Transverse colon (tissue), 4 donors: ENCODE measurements at regions of chr15 and their contacts with region 1.

Region 1: DNA sequence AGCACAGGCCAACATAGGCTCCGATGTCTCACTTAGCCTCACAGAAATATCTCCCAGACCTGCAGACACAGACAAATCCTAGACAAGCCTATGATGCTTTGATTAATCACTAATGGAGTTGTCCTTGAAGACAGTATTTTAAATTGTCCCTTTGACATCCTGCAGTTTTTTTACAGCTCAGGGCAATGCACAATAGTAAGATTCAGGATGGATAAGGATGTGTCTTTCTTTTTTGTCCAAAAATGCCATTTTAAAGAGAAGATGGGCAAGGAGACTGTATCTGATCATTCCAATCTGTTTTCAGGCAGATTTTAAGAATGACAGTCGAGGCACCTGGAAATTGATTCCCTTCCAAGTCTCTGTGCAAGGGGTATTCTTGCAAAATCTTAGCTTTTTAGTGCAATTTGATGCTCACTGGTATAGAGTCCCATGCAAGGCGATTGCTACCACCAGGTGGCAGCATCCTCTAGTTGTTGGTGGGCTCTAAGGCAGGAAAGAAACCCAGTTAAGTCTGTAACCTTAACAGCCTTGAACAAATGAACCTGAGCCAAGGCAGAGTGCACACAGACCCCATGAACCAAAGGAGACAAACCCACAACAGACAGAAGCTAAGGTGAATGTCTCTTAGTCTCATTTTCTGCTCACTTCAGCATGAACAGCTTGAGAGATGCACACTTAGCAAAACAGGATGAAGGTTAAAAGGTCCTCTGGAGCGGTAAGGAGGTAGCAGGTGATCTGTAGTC is 51.2 kb upstream of the MINAR1 start:
- DNase-seq: peak; percentile 76
- H3K4me3 ChIP-seq: no peak overlapping the region
- H3K27ac ChIP-seq: no peak overlapping the region
- H3K4me1 ChIP-seq: peaks cover 0 to 3% (median 0%) of the 10 kb centered on the region in 4 donors
- H3K27me3 ChIP-seq: no peaks in the 10 kb centered on the region
- CTCF ChIP-seq: peak; percentile 78 to 89 (median 87)
- EP300 ChIP-seq: no peak
- POLR2A ChIP-seq: no peak

Region 2: DNA sequence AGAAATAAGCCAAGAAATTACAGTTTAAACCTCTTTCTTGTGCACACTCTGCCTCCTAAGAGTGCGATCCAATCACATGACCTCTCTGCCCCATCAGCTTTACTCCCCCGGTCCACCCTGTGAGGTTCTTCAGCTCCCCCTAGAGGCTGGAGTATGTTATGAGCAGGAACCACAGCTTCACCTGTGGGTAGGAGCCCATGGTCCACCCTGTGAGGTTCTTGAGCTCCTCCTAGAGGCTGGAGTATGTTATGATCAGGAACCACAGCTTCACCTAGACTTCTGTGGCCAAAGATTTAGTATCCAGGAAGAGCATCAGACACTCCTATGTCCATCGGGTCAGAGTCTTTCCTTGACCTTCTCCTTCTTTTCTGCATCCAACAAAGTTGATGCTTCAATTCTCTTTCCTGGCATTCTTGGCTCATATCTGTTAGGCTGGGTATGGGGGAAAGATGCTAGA is 215.2 kb after region 1 on chr15:
- in situ Hi-C with region 1: loop called in 1 of 4 experiments (anchors 10 kb)
- intact Hi-C with region 1: no loop called
- DNase-seq: peak; percentile 47
- H3K4me3 ChIP-seq: no peak overlapping the region
- H3K27ac ChIP-seq: no peak overlapping the region
- H3K4me1 ChIP-seq: no peaks in the 10 kb centered on the region
- H3K27me3 ChIP-seq: peaks cover 5% of the 10 kb centered on the region
- CTCF ChIP-seq: peak; percentile 54 to 93 (median 81)
- EP300 ChIP-seq: no peak
- POLR2A ChIP-seq: no peak

Region 3: DNA sequence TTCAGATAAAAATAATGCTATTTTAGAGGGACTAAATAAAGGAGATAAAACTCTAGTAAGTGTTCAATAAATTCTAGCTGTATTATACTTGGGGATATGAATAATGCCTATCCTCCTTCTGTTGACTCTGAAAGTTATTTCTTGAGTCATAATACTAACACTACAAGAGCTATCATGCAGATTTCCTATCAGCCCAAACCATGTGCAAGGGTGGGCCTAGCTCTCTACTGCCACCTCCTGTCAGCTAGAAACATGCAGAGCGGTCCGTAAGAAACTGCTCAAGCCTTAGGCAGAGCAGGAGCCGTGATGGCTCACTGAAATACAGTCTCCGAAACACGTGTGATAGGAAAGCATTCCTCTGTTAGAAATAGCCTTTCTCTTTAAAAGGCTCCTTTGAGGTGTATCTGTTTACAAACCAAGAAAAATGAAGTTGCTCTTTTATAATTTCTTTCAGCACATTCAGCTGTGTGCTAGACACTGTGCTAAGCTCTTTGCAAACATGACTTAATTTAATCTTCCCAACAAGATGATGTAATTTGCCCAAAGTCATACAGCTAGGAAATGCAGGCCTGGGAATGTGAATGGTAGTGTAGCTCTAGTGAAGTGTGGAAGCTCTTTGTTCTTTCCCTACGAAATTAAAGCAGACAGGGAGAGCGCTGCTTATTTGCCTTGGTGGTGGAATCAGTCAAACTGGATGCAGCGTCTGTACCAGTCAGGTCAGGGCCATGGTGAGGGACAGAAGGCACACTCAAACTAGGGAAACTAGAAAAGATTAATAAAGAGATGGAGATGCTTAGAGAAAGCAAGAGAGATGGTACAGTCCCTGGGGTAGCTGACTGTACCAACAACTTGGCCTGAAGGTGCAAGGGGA is 472.8 kb after region 1 on chr15:
- in situ Hi-C with region 1: no loop called
- intact Hi-C with region 1: loop called (anchors 5 kb)
- DNase-seq: peak; percentile 60
- H3K4me3 ChIP-seq: no peak overlapping the region
- H3K27ac ChIP-seq: no peak overlapping the region
- H3K4me1 ChIP-seq: peaks cover 0 to 2% (median 0%) of the 10 kb centered on the region in 4 donors
- H3K27me3 ChIP-seq: no peaks in the 10 kb centered on the region
- CTCF ChIP-seq: peak; percentile 64 to 93 (median 89)
- EP300 ChIP-seq: no peak
- POLR2A ChIP-seq: no peak